ENCODE measurements at regions of chr18 and their contacts with region 1.

Region 1: DNA sequence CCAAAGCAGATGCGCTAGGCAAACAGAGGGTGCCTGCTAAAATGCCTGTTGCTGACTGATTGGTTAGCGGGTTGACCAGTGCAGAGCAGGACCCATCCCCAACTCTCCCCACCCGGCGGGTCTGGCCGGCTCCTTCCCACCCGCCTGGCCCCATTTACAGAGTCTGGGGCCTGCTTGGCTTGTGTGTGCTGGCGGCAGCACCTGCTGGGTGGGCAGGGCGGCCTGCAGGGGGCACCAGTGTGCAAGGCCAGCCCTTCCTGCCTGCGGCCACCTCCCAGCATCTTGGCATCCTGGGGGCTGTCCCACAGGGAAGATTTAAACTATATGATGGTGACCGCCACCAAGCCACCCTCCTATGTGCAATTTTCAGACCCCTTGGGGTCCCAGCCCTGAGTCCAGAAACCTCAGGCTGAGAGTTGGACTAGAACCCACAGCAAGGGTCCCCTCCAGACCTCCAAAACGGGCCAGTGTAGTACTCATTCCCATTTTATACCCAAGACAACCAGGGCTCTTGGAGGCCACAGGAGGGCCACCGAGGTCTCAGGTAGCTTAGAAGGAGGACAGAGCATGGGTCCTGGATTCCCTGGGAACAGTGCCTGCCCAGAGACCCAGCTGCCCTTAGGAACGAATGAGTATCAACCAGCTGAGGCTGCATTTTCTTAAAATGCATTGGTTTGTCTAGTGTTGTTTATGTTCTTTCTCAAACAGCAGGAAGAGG is 173.6 kb downstream of the SMAD7 start:
- DNase-seq: peak; percentile 77
- H3K4me3 ChIP-seq: no peak overlapping the region
- H3K27ac ChIP-seq: peak overlapping the region in 3 of 4 donors; percentile 6 to 19 (median 16)
- H3K4me1 ChIP-seq: peaks cover 0 to 63% (median 50%) of the 10 kb centered on the region in 4 donors
- H3K27me3 ChIP-seq: no peaks in the 10 kb centered on the region
- CTCF ChIP-seq: peak; percentile 56 to 85 (median 72)
- EP300 ChIP-seq: no peak
- POLR2A ChIP-seq: no peak

Region 2: DNA sequence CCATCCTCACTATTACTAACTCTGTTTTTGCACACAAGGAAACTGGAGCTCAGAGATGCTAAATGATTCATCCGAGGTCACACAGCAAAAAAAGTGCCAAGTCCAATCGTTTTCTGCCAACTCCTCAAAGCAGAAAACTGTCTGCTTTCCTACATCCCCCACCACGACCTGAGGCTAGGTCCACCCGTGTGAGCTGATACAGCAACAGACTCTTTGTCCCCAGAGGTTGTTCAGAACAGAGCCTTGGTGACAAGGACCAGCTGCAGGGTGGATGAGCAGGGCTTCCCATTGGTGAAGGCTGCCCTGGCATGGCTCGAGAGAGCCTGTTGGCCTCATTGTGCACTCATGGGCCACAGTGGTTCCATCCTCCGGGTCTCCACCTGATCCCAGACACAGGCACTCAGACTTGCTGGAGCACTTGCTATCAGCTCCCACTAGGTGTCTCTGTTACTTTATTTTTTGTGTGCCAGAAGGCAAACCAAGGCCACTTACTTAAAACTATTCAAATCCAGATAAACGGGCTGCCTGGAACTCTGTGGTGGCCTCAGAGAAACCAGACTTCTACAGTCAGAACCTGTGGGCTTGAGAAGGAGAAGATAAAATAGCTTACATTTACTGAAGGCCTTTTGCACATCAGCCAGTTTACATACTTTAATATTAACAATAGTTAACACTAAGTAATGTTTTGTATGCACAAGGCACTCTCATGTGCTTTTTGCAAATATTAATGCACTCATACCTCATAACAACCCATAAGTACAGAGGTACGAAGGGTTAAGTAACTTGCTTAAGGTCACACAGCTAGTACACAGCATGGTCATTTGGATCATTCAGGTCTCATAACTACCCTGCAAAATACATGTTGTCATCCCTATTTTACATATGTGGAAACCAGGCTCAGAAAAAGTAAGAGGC is 301.3 kb before region 1 on chr18:
- intact Hi-C with region 1: no loop called
- DNase-seq: no peak
- H3K4me3 ChIP-seq: no peak overlapping the region
- H3K27ac ChIP-seq: no peak overlapping the region
- H3K4me1 ChIP-seq: peaks cover 0 to 4% (median 0%) of the 10 kb centered on the region in 4 donors
- H3K27me3 ChIP-seq: no peaks in the 10 kb centered on the region
- CTCF ChIP-seq: peak; percentile 43 to 88 (median 78)
- EP300 ChIP-seq: no peak
- POLR2A ChIP-seq: no peak

Region 3: GRCh38 chr18:48827291-48828193 is 50.4 kb after region 1 on chr18:
- intact Hi-C with region 1: loop called (anchors 5 kb)
- DNase-seq: peak; percentile 61
- H3K4me3 ChIP-seq: peak overlapping the region in 3 of 4 donors; percentile 2 to 13 (median 9)
- H3K27ac ChIP-seq: peak overlapping the region; percentile 29 to 77 (median 57)
- H3K4me1 ChIP-seq: peaks cover 0 to 50% (median 33%) of the 10 kb centered on the region in 4 donors
- H3K27me3 ChIP-seq: no peaks in the 10 kb centered on the region
- CTCF ChIP-seq: no peak
- EP300 ChIP-seq: no peak
- POLR2A ChIP-seq: no peak

Region 4: DNA sequence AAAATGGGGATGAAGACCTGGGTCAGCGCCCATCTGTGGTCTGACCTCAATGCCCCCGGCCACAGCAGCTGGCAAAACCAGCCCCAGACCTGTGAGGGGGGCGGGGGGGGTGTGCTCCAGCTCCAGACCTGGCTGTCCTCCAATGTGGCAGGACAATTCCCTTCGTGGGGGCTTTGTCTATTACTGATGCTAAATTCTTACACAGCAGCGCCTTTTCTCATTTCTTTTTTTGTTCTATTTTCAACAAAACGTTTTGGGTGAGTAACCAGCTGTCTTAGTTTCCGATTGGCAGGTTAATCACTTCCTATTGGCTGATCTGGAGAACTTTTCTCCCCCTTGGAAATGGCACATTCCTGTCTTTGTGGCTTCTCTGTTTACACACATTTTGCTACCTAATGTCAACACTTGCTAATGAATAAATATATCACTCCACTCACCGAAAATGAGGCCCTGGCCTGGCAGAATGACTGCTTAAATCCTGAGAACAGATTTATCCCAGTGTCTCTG is 169.2 kb after region 1 on chr18:
- intact Hi-C with region 1: loop called (anchors 2 kb)
- DNase-seq: no peak
- H3K4me3 ChIP-seq: peak overlapping the region; percentile 50 to 96 (median 93)
- H3K27ac ChIP-seq: peak overlapping the region; percentile 93 to 99 (median 97)
- H3K4me1 ChIP-seq: peaks cover 0 to 75% (median 62%) of the 10 kb centered on the region in 4 donors
- H3K27me3 ChIP-seq: no peaks in the 10 kb centered on the region
- CTCF ChIP-seq: no peak
- EP300 ChIP-seq: no peak
- POLR2A ChIP-seq: no peak

Region 5: DNA sequence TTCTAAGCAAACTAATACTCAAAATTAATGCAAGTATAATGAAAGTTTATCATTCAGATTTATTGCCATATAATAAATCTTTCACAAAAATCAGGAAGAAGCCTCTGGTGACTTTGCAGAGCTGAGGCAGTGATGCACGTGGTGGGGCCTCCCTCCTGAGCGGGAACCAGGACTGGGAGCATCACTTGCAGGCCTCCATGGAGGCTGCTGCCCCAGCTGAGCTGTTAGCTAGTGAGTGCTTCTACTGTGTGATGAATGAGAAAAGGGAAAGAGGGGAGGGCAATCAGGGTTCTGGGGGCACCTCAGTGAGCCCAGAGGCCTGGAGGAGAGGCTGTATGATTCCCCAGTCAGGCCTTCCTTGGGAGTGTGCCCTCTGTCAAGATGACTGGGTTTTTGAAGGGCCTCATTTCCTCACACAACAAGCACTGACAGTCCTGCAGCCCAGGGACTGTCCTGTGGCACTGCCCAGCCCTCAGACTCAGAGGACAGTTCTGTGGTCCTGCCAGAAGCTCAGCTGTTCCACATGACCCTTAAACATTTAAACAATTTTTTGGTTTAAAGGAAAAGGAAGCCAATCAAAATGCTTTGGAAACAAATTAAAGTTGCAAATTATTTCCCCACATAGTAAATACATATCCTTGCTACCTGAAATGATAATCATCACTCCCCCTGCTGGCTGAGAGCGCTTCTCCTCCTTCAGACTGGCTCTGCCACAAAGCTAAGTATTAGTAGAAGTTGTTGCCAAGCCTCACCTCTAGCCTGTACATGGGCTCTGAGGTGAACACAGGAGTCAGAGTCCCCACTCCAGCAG is 264.5 kb after region 1 on chr18:
- intact Hi-C with region 1: loop called (anchors 5 kb)
- DNase-seq: peak; percentile 80
- H3K4me3 ChIP-seq: no peak overlapping the region
- H3K27ac ChIP-seq: no peak overlapping the region
- H3K4me1 ChIP-seq: peaks cover 0 to 8% (median 0%) of the 10 kb centered on the region in 4 donors
- H3K27me3 ChIP-seq: no peaks in the 10 kb centered on the region
- CTCF ChIP-seq: peak; percentile 36 to 68 (median 48)
- EP300 ChIP-seq: no peak
- POLR2A ChIP-seq: no peak

Region 6: DNA sequence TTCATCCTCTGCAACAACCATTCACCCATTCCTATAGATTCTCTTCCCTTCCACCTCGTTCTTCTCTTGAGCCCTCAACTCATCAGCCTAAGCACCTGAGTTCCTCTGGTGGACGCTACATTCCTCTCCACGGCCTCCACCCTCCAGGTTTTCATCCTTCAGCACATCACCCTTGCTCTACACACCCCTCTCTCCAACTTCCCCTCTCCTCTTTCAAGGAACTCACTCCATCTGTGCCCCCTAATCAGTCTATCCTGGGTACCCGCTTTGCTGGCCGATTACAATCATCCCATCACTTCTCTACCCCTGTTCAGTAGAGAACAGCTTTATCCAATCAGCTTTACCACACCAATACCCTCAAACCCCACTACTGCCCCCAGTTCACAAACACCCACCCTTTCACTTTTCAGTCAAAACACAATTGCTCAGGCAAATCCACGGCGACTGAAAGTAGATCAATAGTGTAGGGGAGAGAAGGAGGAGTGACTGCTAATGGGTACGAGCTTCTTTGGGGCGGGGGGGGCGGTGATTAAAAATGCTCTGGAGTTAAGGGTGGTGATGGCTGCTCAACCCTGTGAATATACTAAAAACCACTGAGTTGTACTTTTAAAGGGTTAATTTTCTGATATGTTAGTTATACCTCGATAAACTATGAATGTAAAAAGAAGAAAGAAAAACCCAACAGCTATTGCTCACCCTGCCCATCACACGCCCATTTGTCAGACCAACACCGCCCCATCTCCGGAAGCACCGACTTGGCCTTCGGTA is 682.4 kb after region 1 on chr18:
- intact Hi-C with region 1: loop called (anchors 10 kb)
- DNase-seq: no peak
- H3K4me3 ChIP-seq: peak overlapping the region; percentile 68 to 91 (median 80)
- H3K27ac ChIP-seq: peak overlapping the region; percentile 86 to 89 (median 87)
- H3K4me1 ChIP-seq: peaks cover 0 to 30% (median 18%) of the 10 kb centered on the region in 4 donors
- H3K27me3 ChIP-seq: no peaks in the 10 kb centered on the region
- CTCF ChIP-seq: no peak
- EP300 ChIP-seq: no peak
- POLR2A ChIP-seq: no peak